Aorta (tissue), 5 donors: ENCODE measurements at regions of chr17 and their contacts with region 1.

Region 1: DNA sequence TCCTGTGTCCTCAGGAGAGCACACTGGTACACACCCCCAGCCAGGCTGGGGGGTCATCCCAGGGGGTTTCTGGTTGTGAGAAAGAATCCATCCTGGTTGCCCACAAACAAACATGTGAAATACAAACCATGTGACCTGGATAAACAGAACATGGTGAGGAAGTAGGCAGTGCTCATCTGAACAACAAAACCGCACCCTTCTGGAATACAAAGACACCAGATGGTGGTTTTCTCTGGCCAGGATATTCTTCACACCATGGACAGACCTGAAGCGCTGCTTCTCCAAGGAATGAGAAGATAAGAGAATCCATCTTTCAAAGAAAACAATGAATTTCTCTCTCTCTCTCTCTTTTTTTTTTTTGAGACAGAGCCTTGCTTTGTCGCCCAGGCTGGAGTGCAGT is 302.3 kb downstream of the SLC39A11 start:
- DNase-seq: no peak
- ATAC-seq: no peak
- H3K4me3 ChIP-seq: no peak overlapping the region
- H3K27ac ChIP-seq: no peak overlapping the region
- H3K4me1 ChIP-seq: no peaks in the 10 kb centered on the region
- H3K27me3 ChIP-seq: no peaks in the 10 kb centered on the region

Region 2: DNA sequence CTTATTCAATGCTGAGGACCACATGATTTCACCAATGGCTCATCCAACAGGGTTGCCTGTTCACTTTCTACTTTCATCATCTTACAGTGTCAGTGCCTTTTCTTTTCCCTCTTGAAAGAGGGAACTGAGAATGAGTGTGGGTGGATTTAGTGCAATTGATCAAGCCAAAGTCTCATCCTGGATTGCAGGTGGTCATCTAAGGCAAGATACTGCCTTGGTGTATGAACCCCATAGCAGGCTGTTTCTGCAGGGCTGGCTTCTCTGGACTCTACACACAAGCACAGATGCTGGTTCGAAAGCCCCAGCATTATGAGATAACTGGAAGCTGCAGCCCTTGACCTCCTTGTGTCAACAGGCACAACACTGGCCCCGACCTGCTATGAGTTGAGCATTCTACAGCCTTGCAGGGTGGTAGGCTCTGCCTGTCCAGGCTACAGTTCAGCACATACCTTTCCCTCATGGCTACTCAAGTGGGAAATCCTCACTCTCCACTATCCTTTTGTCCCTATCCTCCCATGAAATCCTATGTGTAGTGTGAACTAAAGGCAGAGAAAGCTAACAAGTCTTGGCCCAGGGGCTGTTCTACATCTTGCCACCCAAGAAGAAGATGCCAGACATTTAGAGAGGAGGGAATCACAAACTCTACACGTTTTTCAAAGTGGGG is 56.4 kb before region 1 on chr17:
- intact Hi-C with region 1: no loop called
- DNase-seq: no peak
- ATAC-seq: no peak
- H3K4me3 ChIP-seq: no peak overlapping the region
- H3K27ac ChIP-seq: no peak overlapping the region
- H3K4me1 ChIP-seq: no peaks in the 10 kb centered on the region
- H3K27me3 ChIP-seq: no peaks in the 10 kb centered on the region

Region 3: DNA sequence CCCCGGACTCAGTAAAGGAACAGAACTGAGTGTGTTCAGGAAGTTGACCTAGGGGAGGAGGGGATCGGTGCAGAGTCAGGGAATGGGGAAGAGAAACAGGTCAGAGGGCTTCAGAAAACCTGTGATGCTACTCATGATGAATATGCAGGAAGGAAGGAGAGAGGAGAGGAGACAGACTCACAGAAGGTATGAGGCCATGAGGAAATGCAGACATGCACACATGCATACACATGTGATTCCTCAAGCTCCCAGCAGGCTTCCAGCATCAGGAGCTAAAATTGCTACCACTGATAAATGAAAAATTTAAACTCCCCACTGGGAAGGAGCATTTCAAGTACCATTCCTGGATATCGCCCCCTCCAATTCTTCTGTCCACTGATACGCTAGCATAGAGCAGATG is 39.7 kb after region 1 on chr17:
- intact Hi-C with region 1: no loop called
- DNase-seq: no peak
- ATAC-seq: no peak
- H3K4me3 ChIP-seq: no peak overlapping the region
- H3K27ac ChIP-seq: no peak overlapping the region
- H3K4me1 ChIP-seq: no peaks in the 10 kb centered on the region
- H3K27me3 ChIP-seq: no peaks in the 10 kb centered on the region

Region 4: GRCh38 chr17:72916991-72917390 is 126.8 kb after region 1 on chr17:
- intact Hi-C with region 1: loop called in 1 of 2 experiments (anchors 10 kb)
- DNase-seq: no peak
- ATAC-seq: no peak
- H3K4me3 ChIP-seq: no peak overlapping the region
- H3K27ac ChIP-seq: no peak overlapping the region
- H3K4me1 ChIP-seq: no peaks in the 10 kb centered on the region
- H3K27me3 ChIP-seq: no peaks in the 10 kb centered on the region

Region 5: DNA sequence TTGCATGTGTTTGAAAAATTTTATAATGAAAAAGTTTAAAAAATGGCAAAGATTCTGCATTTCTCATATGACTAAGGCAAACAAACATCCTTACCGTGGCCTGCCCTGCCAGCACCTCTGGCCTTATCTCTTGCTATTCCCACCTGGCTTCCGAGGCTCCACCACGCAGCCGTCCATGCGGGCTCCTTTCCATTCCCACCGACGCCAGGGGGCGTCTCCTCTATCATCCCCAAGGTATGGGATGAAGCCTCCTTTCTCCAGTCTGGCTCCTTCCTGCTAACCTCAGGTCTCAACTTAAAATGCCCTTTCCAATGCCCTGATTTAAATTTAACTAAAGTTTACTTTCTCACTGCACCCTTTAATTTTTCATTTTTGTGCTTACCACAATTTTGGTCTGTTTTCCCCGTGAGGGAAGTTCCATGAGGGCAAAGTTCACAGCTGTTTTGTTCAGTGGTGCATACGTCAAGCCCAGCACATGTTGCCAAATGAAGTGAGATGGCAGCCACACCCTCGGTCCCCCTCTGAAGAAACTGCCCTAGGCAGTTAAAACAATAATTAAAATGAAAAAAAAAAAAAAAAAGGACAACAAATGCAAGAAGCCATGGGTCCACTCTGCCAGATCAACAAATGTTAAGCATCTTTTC is 867.4 kb after region 1 on chr17:
- intact Hi-C with region 1: no loop called
- DNase-seq: peak; percentile 60 to 83
- ATAC-seq: no peak
- H3K4me3 ChIP-seq: no peak overlapping the region
- H3K27ac ChIP-seq: no peak overlapping the region
- H3K4me1 ChIP-seq: no peaks in the 10 kb centered on the region
- H3K27me3 ChIP-seq: peaks cover 0 to 2% of the 10 kb centered on the region in 2 donors